ENCODE measurements at regions of chr5 and their contacts with region 1.

Region 1: GRCh38 chr5:44332285-44332971 is 56.8 kb downstream of the FGF10 start:
- DNase-seq: peak; percentile 52
- ATAC-seq: peak; percentile 66; the same call in 1 of the 2 replicates
- H3K4me3 ChIP-seq: no peak overlapping the region
- H3K27ac ChIP-seq: no peak overlapping the region
- H3K4me1 ChIP-seq: no peaks in the 10 kb centered on the region
- H3K27me3 ChIP-seq: no peaks in the 10 kb centered on the region
- CTCF ChIP-seq: peak; percentile 70
- POLR2A ChIP-seq: no peak
- RAD21 ChIP-seq: peak; percentile 70

Region 2: GRCh38 chr5:43631182-43631910 is 701.1 kb before region 1 on chr5:
- CTCF ChIA-PET with region 1: interaction called, 18 read pairs
- POLR2A ChIA-PET with region 1: no interaction called
- dilution Hi-C with region 1: no loop called
- in situ Hi-C with region 1: loop called (anchors 10 kb)
- intact Hi-C with region 1: loop called (anchors 2 kb)
- DNase-seq: peak; percentile 87
- ATAC-seq: peak; percentile 96
- H3K4me3 ChIP-seq: no peak overlapping the region
- H3K27ac ChIP-seq: no peak overlapping the region
- H3K4me1 ChIP-seq: peaks cover 3% of the 10 kb centered on the region; the same call in 1 of the 2 replicates
- H3K27me3 ChIP-seq: no peaks in the 10 kb centered on the region
- CTCF ChIP-seq: peak; percentile 83
- POLR2A ChIP-seq: no peak
- RAD21 ChIP-seq: peak; percentile 83

Region 3: DNA sequence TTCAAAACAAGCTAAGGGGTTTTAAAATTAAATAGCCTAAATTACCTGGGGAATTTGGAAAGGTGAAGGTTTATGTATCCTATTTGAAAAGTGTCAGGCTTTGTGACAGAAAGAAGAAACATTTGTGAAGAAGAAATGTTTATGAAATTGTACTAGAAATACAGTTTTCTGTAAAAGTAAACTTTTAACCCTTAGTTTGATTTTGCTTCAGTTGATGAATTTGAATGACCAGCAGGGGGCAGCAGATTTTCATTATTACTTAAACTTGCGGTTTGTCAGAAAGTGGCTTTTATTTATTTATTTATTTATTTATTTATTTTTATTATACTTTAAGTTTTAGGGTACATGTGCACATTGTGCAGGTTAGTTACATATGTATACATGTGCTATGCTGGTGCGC is 671.3 kb before region 1 on chr5:
- CTCF ChIA-PET with region 1: no interaction called
- POLR2A ChIA-PET with region 1: no interaction called
- dilution Hi-C with region 1: no loop called
- in situ Hi-C with region 1: no loop called
- intact Hi-C with region 1: loop called (anchors 1 kb)
- DNase-seq: peak; percentile 59
- ATAC-seq: no peak
- H3K4me3 ChIP-seq: no peak overlapping the region
- H3K27ac ChIP-seq: no peak overlapping the region
- H3K4me1 ChIP-seq: peaks cover 2% of the 10 kb centered on the region; the same call in 1 of the 2 replicates
- H3K27me3 ChIP-seq: no peaks in the 10 kb centered on the region
- CTCF ChIP-seq: peak; percentile 58
- POLR2A ChIP-seq: no peak
- RAD21 ChIP-seq: peak; percentile 52

Region 4: GRCh38 chr5:43839218-43839617 is 493.2 kb before region 1 on chr5:
- CTCF ChIA-PET with region 1: no interaction called
- POLR2A ChIA-PET with region 1: no interaction called
- dilution Hi-C with region 1: no loop called
- in situ Hi-C with region 1: no loop called
- intact Hi-C with region 1: loop called (anchors 5 kb)
- DNase-seq: peak; percentile 91
- ATAC-seq: peak; percentile 86
- H3K4me3 ChIP-seq: no peak overlapping the region
- H3K27ac ChIP-seq: peak overlapping the region; percentile 88; the same call in 1 of the 2 replicates
- H3K4me1 ChIP-seq: peaks cover 5% of the 10 kb centered on the region; the same call in 1 of the 2 replicates
- H3K27me3 ChIP-seq: no peaks in the 10 kb centered on the region
- CTCF ChIP-seq: no peak
- POLR2A ChIP-seq: no peak
- RAD21 ChIP-seq: no peak

Region 5: GRCh38 chr5:43874772-43875171 is 457.7 kb before region 1 on chr5:
- CTCF ChIA-PET with region 1: no interaction called
- POLR2A ChIA-PET with region 1: no interaction called
- dilution Hi-C with region 1: no loop called
- in situ Hi-C with region 1: no loop called
- intact Hi-C with region 1: no loop called
- DNase-seq: peak; percentile 52
- ATAC-seq: peak; percentile 95
- H3K4me3 ChIP-seq: no peak overlapping the region
- H3K27ac ChIP-seq: no peak overlapping the region
- H3K4me1 ChIP-seq: peaks cover 2% of the 10 kb centered on the region; the same call in 1 of the 2 replicates
- H3K27me3 ChIP-seq: no peaks in the 10 kb centered on the region
- CTCF ChIP-seq: no peak
- POLR2A ChIP-seq: no peak
- RAD21 ChIP-seq: no peak

Region 6: GRCh38 chr5:44574626-44575157 is 242.3 kb after region 1 on chr5:
- CTCF ChIA-PET with region 1: no interaction called
- POLR2A ChIA-PET with region 1: no interaction called
- dilution Hi-C with region 1: no loop called
- in situ Hi-C with region 1: no loop called
- intact Hi-C with region 1: no loop called
- DNase-seq: no peak
- ATAC-seq: no peak
- H3K4me3 ChIP-seq: no peak overlapping the region
- H3K27ac ChIP-seq: no peak overlapping the region
- H3K4me1 ChIP-seq: no peaks in the 10 kb centered on the region
- H3K27me3 ChIP-seq: no peaks in the 10 kb centered on the region
- CTCF ChIP-seq: no peak
- POLR2A ChIP-seq: no peak
- RAD21 ChIP-seq: no peak

Measured in IMR-90 (cell line).